Ovary (tissue), 10 donors: ENCODE measurements at regions of chr7 and their contacts with region 1.

Region 1: GRCh38 chr7:4080006-4080405 is 602.1 kb upstream of the FOXK1 start:
- DNase-seq: no peak
- H3K4me3 ChIP-seq: no peak overlapping the region
- H3K27ac ChIP-seq: no peak overlapping the region
- H3K4me1 ChIP-seq: no peaks in the 10 kb centered on the region
- H3K27me3 ChIP-seq: no peaks in the 10 kb centered on the region
- CTCF ChIP-seq: no peak
- EP300 ChIP-seq: no peak
- POLR2A ChIP-seq: no peak

Region 2: GRCh38 chr7:3598854-3599253 is 481.2 kb before region 1 on chr7:
- intact Hi-C with region 1: no loop called
- DNase-seq: no peak
- H3K4me3 ChIP-seq: no peak overlapping the region
- H3K27ac ChIP-seq: no peak overlapping the region
- H3K4me1 ChIP-seq: no peaks in the 10 kb centered on the region
- H3K27me3 ChIP-seq: no peaks in the 10 kb centered on the region
- CTCF ChIP-seq: no peak
- EP300 ChIP-seq: no peak
- POLR2A ChIP-seq: no peak

Region 3: DNA sequence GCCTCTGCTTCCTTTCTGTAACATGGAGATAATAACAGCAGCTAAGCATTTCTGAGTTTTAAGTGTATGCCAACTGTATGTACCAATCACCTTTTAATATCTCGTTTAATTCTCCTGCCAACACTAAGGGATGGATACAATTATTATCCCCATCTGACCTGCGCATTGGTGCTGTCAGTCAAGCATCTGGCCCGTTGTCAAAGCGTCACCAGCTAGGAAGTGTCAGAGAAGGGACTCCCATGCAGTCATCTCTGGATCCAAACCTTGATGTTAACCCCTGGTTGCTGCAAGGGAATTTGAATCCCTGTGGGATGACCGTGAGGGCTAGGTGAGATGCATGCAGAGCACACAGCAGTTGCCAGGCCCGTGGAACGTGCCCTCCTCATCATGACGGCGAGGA is 272.2 kb before region 1 on chr7:
- intact Hi-C with region 1: no loop called
- DNase-seq: no peak
- H3K4me3 ChIP-seq: no peak overlapping the region
- H3K27ac ChIP-seq: no peak overlapping the region
- H3K4me1 ChIP-seq: no peaks in the 10 kb centered on the region
- H3K27me3 ChIP-seq: no peaks in the 10 kb centered on the region
- CTCF ChIP-seq: no peak
- EP300 ChIP-seq: no peak
- POLR2A ChIP-seq: no peak

Region 4: GRCh38 chr7:4058158-4058557 is 21.8 kb before region 1 on chr7:
- intact Hi-C with region 1: no loop called
- DNase-seq: no peak
- H3K4me3 ChIP-seq: no peak overlapping the region
- H3K27ac ChIP-seq: no peak overlapping the region
- H3K4me1 ChIP-seq: no peaks in the 10 kb centered on the region
- H3K27me3 ChIP-seq: no peaks in the 10 kb centered on the region
- CTCF ChIP-seq: no peak
- EP300 ChIP-seq: no peak
- POLR2A ChIP-seq: no peak

Region 5: DNA sequence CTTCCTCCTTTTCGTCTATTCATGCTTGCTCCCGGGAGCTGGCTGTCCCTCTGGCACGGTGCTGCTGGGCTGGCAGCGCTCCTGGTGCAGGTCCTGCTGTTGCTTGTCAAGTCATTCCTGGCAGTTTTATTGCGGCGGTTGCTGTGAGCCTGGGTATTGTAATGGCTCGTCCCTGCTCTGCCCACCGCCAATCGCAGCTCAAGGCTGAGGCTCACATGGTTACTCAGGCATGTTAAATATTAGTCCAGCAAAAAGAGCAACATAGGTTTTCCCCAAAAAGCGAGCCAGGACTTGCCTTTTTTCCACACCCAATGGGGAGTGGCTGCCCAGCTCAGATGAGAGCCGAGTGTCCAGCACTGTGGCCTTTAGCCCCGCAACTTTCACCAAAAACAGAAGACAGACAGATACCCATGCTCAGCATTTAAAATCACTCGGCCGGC is 109.1 kb after region 1 on chr7:
- intact Hi-C with region 1: loop called in 1 of 4 experiments (anchors 5 kb)
- DNase-seq: peak; percentile 59 to 83 (median 75)
- H3K4me3 ChIP-seq: no peak overlapping the region
- H3K27ac ChIP-seq: no peak overlapping the region
- H3K4me1 ChIP-seq: peaks cover 4% of the 10 kb centered on the region
- H3K27me3 ChIP-seq: no peaks in the 10 kb centered on the region
- CTCF ChIP-seq: no peak
- EP300 ChIP-seq: no peak
- POLR2A ChIP-seq: no peak